SK-N-SH (cell line): ENCODE measurements at regions of chr12 and their contacts with region 1.

Region 1: DNA sequence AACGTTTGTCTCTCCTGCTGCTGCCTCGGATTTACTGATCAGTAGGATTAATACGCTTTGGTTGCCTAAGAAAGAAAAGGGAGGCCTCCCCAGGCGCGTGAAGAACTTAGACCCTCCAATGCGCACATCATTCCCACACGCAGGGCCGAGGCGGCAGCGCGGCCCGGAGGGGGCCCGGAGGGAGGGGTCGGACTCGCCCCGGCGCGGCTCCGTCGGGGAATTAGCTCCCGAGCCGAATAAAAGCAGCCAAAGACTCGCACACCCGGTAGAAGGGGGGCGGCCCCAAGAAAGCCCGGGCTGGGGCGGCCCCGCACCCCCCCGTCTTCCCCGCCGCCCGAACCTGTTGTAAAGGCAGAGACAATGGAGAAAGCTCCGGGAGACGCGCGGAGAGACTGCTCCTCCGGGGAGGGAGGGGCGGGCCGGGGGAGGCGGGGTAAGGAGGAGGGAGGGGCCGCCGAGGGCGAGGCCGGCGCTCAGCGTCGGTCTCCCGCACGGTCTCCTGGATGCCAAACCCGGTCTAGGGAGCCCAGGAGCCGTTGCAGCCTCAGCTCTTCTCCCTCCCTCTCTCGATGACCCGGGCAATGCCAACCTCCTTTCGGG is at the start of gene NELL2:
- DNase-seq: peak; percentile 83
- H3K4me3 ChIP-seq: peak within 1 kb of the TSS; percentile 47 to 60
- H3K27ac ChIP-seq: no peak within 1 kb of the TSS
- H3K4me1 ChIP-seq: peaks cover 4 to 16% of the 10 kb centered on the region in 2 experiments; a peak in 1 of 4 replicates
- H3K27me3 ChIP-seq: peaks cover 22% of the 10 kb centered on the region; the same call in 1 of the 2 replicates
- CTCF ChIP-seq: no peak
- EP300 ChIP-seq: no peak
- RAD21 ChIP-seq: no peak
- polyA plus RNA-seq, gene NELL2: 0.28 and 0.35 TPM in 2 replicates

Region 2: DNA sequence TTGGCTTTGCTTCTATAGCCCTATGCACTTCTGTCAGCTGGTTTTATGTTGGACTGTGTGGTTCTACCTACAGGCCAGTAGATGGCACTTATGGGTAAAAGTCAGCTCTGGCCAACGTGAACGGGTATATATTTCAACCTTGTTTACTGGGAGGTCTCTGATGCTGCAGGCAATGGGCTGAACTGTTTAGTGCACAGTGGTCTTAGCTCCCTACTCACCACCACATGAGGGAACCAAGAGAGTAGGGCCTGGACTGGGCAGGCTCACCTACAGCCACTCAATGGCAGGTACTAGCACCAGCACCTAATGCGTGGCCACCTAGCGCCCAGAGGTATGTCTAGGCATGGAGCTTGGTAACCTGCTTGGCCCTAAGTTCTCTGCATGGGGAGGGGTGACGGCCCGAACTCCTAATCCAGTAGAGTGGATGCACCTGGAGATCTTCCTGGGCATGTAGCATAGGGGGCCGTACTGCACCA is 558.4 kb before region 1 on chr12:
- CTCF ChIA-PET with region 1: interaction called, 49 read pairs
- POLR2A ChIA-PET with region 1: no interaction called
- DNase-seq: peak; percentile 25
- H3K4me3 ChIP-seq: no peak overlapping the region; a peak in 1 of 4 replicates
- H3K27ac ChIP-seq: no peak overlapping the region
- H3K4me1 ChIP-seq: peaks cover 0 to 6% of the 10 kb centered on the region in 2 experiments; a peak in 2 of 4 replicates
- H3K27me3 ChIP-seq: no peaks in the 10 kb centered on the region
- CTCF ChIP-seq: peak; percentile 51
- EP300 ChIP-seq: no peak
- RAD21 ChIP-seq: peak; percentile 78

Region 3: GRCh38 chr12:44728566-44728965 is 147.5 kb before region 1 on chr12:
- CTCF ChIA-PET with region 1: no interaction called
- POLR2A ChIA-PET with region 1: no interaction called
- DNase-seq: no peak
- H3K4me3 ChIP-seq: no peak overlapping the region
- H3K27ac ChIP-seq: no peak overlapping the region
- H3K4me1 ChIP-seq: no peaks in the 10 kb centered on the region
- H3K27me3 ChIP-seq: no peaks in the 10 kb centered on the region
- CTCF ChIP-seq: no peak
- EP300 ChIP-seq: no peak
- RAD21 ChIP-seq: no peak

Region 4: GRCh38 chr12:44851586-44851985 is 24.5 kb before region 1 on chr12:
- CTCF ChIA-PET with region 1: no interaction called
- POLR2A ChIA-PET with region 1: no interaction called
- DNase-seq: no peak
- H3K4me3 ChIP-seq: no peak overlapping the region
- H3K27ac ChIP-seq: no peak overlapping the region
- H3K4me1 ChIP-seq: no peaks in the 10 kb centered on the region; a peak in 1 of 4 replicates
- H3K27me3 ChIP-seq: no peaks in the 10 kb centered on the region
- CTCF ChIP-seq: no peak
- EP300 ChIP-seq: no peak
- RAD21 ChIP-seq: no peak

Region 5: DNA sequence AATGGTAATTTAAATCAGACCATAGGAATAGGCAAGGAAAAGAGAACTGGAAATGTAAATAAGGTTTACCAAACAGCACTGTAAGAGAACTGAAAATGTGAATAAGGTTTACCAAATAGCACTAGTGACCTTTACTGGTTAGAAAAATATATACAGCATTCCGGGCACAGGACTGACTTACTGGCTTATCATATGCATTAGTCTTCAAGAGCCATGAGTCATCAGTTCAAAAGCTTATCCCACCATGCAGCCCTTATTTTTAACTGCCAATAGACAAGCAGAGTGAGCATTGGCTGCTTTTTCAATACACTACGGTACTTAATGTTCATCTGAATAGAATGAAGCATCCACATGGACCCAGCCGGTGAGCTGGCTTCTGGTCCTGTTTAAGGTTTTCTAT is 13.1 kb after region 1 on chr12:
- CTCF ChIA-PET with region 1: interaction called, 10 read pairs
- POLR2A ChIA-PET with region 1: no interaction called
- DNase-seq: no peak
- H3K4me3 ChIP-seq: no peak overlapping the region
- H3K27ac ChIP-seq: no peak overlapping the region
- H3K4me1 ChIP-seq: peaks cover 0 to 15% of the 10 kb centered on the region in 2 experiments; a peak in 1 of 4 replicates
- H3K27me3 ChIP-seq: no peaks in the 10 kb centered on the region
- CTCF ChIP-seq: no peak
- EP300 ChIP-seq: no peak
- RAD21 ChIP-seq: no peak